ENCODE measurements at regions of chr10 and their contacts with region 1.

Region 1: GRCh38 chr10:125822878-125823662 is at the starts of genes BCCIP and UROS:
- DNase-seq: peak; percentile 83 to 97 (median 91)
- ATAC-seq: peak; percentile 85
- H3K4me3 ChIP-seq: peak within 1 kb of the TSS; percentile 84
- H3K4me3 Mint-ChIP-seq: peak within 1 kb of the TSS; percentile 91
- H3K27ac ChIP-seq: peak within 1 kb of the TSS; percentile 84 to 97
- H3K27ac Mint-ChIP-seq: peak within 1 kb of the TSS; percentile 82
- H3K4me1 ChIP-seq: peaks cover 30% of the 10 kb centered on the region
- H3K4me1 Mint-ChIP-seq: peaks cover 31% of the 10 kb centered on the region
- H3K27me3 ChIP-seq: no peaks in the 10 kb centered on the region
- H3K27me3 Mint-ChIP-seq: no peaks in the 10 kb centered on the region
- CTCF ChIP-seq: no peak
- total RNA-seq, gene BCCIP: 31.2 to 32.7 TPM
- total RNA-seq, gene UROS: 18.2 to 18.6 TPM

Region 2: DNA sequence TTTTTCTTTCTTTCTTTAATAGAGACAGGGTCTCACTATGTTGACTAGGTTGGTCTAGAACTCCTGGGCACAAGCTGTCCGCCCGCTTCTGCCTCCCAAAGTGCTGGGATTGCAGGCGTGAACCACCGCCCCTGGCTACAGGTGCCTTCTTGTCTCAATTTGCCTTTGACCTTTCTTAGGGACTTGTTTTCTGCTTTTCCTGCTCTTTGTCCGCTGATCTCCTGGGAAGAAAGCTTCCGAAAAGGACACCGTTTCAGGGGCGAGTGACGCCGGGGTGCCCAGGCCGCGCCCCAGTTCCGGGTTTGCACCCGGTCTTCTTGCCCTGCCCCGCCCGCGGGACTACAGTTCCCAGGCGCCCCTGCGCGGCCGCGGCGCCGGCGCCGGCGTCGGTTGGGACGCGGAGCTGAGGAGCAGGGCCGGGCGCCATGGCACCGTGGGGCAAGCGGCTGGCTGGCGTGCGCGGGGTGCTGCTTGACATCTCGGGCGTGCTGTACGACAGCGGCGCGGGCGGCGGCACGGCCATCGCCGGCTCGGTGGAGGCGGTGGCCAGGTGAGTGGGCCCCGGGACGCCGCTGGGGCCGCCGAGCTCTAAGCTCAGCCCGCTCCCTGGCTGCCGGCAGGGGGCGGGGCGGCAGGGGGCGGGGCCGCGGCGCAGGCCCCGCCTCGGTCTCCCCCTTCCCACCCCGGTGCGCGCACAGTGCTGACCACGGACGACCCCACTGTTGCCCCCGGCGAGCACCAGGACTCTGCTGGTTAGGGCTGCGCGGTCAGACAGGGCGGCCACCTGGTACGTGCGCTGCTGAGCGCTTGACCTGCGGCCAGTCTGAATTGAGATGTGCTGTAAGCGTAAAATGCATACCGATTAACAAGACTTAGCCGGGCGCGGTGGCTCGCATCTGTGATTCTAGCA is 1361.4 kb before region 1 on chr10 and contains the start of gene LHPP:
- CTCF ChIA-PET with region 1: no interaction called
- POLR2A ChIA-PET with region 1: no interaction called
- intact Hi-C with region 1: loop called in 1 of 2 experiments (anchors 5 kb)
- DNase-seq: peak; percentile 65 to 93 (median 84)
- ATAC-seq: peak; percentile 94
- H3K4me3 ChIP-seq: peak within 1 kb of the TSS; percentile 65
- H3K4me3 Mint-ChIP-seq: peak within 1 kb of the TSS; percentile 92
- H3K27ac ChIP-seq: peak within 1 kb of the TSS; percentile 53 to 67
- H3K27ac Mint-ChIP-seq: peak within 1 kb of the TSS; percentile 83
- H3K4me1 ChIP-seq: peaks cover 36% of the 10 kb centered on the region
- H3K4me1 Mint-ChIP-seq: peaks cover 27% of the 10 kb centered on the region
- H3K27me3 ChIP-seq: peaks cover 0 to 8% of the 10 kb centered on the region in 2 experiments
- H3K27me3 Mint-ChIP-seq: peaks cover 10% of the 10 kb centered on the region
- CTCF ChIP-seq: peak; percentile 17
- total RNA-seq, gene LHPP: 15.3 to 19.6 TPM

Region 3: GRCh38 chr10:124802313-124802675 is 1020.8 kb before region 1 on chr10:
- CTCF ChIA-PET with region 1: no interaction called
- POLR2A ChIA-PET with region 1: no interaction called
- intact Hi-C with region 1: loop called in 1 of 2 experiments (anchors 10 kb)
- DNase-seq: peak in 3 of 14 experiments; percentile 11 to 53 (median 47)
- ATAC-seq: no peak
- H3K4me3 ChIP-seq: peak overlapping the region; percentile 95
- H3K4me3 Mint-ChIP-seq: peak overlapping the region; percentile 96
- H3K27ac ChIP-seq: peak overlapping the region; percentile 36 to 72
- H3K27ac Mint-ChIP-seq: peak overlapping the region; percentile 86
- H3K4me1 ChIP-seq: peaks cover 13% of the 10 kb centered on the region
- H3K4me1 Mint-ChIP-seq: peaks cover 22% of the 10 kb centered on the region
- H3K27me3 ChIP-seq: no peaks in the 10 kb centered on the region
- H3K27me3 Mint-ChIP-seq: no peaks in the 10 kb centered on the region
- CTCF ChIP-seq: no peak

Region 4: DNA sequence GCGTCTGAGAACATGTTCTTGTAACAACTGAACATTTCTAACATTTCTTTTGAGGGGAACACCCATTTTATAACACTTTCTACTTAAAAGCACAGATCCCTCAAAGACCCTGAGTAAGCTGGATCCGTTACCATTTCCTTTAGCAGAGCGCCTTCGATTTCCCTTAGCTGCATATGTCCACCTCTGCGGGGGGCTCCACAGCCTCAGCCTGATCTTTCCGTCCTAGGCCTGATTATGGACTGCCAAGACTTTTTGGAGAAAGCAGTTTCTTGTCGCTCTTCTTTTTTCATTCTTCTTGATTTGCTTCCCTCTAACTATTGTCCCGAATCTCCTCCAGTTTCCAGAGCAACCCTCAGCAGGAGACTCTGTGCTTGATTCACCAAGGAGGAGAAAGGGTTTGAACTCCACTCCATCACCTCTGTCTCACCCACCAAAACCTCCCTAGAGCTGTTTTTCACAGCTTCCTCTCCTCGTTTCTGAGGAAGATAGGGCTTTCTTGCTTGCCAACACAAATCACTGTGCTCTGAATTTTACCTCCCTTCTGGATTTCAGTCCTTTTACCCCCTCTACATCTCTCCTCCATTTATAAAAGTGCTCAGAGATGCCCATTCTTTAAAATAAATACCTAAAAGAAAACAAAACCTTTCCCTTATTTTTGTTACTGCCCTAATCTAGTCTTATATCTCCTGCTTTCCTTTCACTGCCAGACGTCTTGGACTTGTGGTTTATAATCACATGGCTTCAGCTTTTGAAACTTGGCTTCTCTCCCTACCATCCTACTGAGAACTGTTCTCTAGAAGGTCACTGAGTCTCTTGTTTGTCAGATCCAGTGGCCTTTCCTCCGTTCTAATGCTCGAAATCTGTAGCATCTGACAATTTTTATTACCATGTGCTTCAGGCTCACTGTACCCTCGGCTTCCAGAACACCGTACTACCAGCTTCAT is 911.7 kb before region 1 on chr10:
- CTCF ChIA-PET with region 1: no interaction called
- POLR2A ChIA-PET with region 1: no interaction called
- intact Hi-C with region 1: loop called in 1 of 2 experiments (anchors 5 kb)
- DNase-seq: no peak
- ATAC-seq: no peak
- H3K4me3 ChIP-seq: no peak overlapping the region
- H3K4me3 Mint-ChIP-seq: no peak overlapping the region
- H3K27ac ChIP-seq: no peak overlapping the region
- H3K27ac Mint-ChIP-seq: no peak overlapping the region
- H3K4me1 ChIP-seq: peaks cover 4% of the 10 kb centered on the region
- H3K4me1 Mint-ChIP-seq: peaks cover 7% of the 10 kb centered on the region
- H3K27me3 ChIP-seq: peaks cover 4 to 5% of the 10 kb centered on the region in 2 experiments
- H3K27me3 Mint-ChIP-seq: peaks cover 22% of the 10 kb centered on the region
- CTCF ChIP-seq: no peak

Region 5: GRCh38 chr10:125719146-125720001 is 103.7 kb before region 1 on chr10 and contains the start of gene EDRF1:
- CTCF ChIA-PET with region 1: interaction called, 3 read pairs
- POLR2A ChIA-PET with region 1: interaction called, 34 read pairs
- intact Hi-C with region 1: loop called (anchors 1 to 10 kb)
- DNase-seq: peak; percentile 98 to 100 (median 99)
- ATAC-seq: peak; percentile 94
- H3K4me3 ChIP-seq: peak within 1 kb of the TSS; percentile 82
- H3K4me3 Mint-ChIP-seq: peak within 1 kb of the TSS; percentile 100
- H3K27ac ChIP-seq: peak within 1 kb of the TSS; percentile 79 to 89
- H3K27ac Mint-ChIP-seq: peak within 1 kb of the TSS; percentile 99
- H3K4me1 ChIP-seq: peaks cover 26% of the 10 kb centered on the region
- H3K4me1 Mint-ChIP-seq: peaks cover 39% of the 10 kb centered on the region
- H3K27me3 ChIP-seq: no peaks in the 10 kb centered on the region
- H3K27me3 Mint-ChIP-seq: no peaks in the 10 kb centered on the region
- CTCF ChIP-seq: no peak
- total RNA-seq, gene EDRF1: 39.0 to 39.8 TPM

Region 6: DNA sequence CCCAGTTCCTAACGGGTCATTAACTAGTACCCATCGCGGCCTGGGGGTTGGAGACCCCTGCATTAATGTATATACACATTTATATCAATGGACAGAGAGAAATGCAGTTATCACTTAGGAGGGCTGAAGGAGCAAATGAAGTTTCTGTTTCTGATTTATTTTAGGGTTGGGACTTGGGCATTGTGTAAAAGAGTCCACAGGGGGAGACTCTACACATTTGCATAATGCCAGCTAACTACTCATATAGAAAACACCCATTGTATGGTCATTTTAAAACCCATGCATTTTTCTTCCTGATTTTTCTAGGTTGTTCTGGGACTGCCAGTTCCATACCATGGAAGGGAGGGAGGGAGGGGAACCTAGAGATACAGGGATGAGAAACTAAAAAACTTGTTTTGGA is 23.8 kb after region 1 on chr10:
- CTCF ChIA-PET with region 1: no interaction called
- POLR2A ChIA-PET with region 1: no interaction called
- intact Hi-C with region 1: no loop called
- DNase-seq: no peak
- ATAC-seq: no peak
- H3K4me3 ChIP-seq: no peak overlapping the region
- H3K4me3 Mint-ChIP-seq: no peak overlapping the region
- H3K27ac ChIP-seq: no peak overlapping the region
- H3K27ac Mint-ChIP-seq: no peak overlapping the region
- H3K4me1 ChIP-seq: no peaks in the 10 kb centered on the region
- H3K4me1 Mint-ChIP-seq: no peaks in the 10 kb centered on the region
- H3K27me3 ChIP-seq: no peaks in the 10 kb centered on the region
- H3K27me3 Mint-ChIP-seq: no peaks in the 10 kb centered on the region
- CTCF ChIP-seq: no peak

Region 7: DNA sequence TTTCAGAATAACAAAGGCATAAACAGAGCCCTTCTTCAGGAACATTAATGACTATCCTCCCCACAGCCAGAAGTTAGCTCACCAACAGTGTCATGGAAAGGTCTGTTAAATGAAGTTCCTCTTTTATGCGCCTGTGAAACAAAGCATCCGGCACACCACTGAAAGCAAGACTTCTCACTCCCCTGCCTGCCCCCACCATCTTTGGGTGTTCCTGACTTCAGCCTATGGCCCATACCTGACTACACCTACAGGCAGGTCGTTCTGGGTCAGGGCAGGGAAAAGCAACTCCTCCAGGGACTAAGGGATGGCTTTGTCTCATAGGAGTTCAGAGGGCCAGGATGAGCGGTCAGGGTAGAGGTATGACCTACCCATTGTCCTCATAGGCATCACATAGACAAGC is 278.7 kb after region 1 on chr10:
- CTCF ChIA-PET with region 1: no interaction called
- POLR2A ChIA-PET with region 1: no interaction called
- intact Hi-C with region 1: no loop called
- DNase-seq: peak in 1 of 14 experiments; percentile 19
- ATAC-seq: no peak
- H3K4me3 ChIP-seq: no peak overlapping the region
- H3K4me3 Mint-ChIP-seq: no peak overlapping the region
- H3K27ac ChIP-seq: no peak overlapping the region
- H3K27ac Mint-ChIP-seq: no peak overlapping the region
- H3K4me1 ChIP-seq: no peaks in the 10 kb centered on the region
- H3K4me1 Mint-ChIP-seq: no peaks in the 10 kb centered on the region
- H3K27me3 ChIP-seq: no peaks in the 10 kb centered on the region
- H3K27me3 Mint-ChIP-seq: no peaks in the 10 kb centered on the region
- CTCF ChIP-seq: no peak

Measured in CD4-positive, alpha-beta T cell (primary cell).